ENCODE measurements at regions of chr9 and their contacts with region 1.

Region 1: DNA sequence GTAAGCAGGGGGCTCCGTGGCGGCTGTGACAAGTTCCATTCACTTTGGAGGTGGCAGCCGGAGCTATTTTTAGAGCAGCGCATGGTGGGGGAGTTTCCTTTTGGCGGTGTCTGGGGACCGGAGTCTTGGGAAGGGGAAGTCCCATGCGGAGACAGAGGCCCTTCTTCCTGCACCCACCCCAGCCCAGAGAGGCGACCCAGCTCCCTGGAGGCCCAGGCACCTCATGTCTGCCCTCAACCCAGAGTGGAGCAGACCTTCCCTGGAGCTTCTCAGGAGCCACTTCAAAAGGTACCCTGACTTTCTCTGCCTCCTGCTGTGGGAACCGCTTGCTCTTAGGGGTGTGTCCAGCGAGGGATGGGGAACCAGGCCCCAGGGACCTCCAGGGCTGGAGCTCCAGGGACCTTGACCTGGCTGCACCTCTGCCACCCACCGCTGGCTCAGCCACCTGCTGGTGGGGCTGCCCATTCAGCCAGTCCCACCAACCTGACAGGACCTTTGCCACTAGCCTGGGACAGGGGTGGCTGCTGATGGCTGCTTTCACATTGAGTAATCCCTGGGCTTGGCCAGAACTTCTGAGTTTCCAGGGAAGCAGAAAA is 34.1 kb downstream of the NEK6 start:
- DNase-seq: no peak
- H3K4me3 ChIP-seq: no peak overlapping the region
- H3K27ac ChIP-seq: no peak overlapping the region
- H3K4me1 ChIP-seq: peaks cover 0 to 14% (median 3%) of the 10 kb centered on the region in 4 experiments; a peak in 5 of 7 replicates
- H3K27me3 ChIP-seq: no peaks in the 10 kb centered on the region
- CTCF ChIP-seq: no peak
- EP300 ChIP-seq: no peak
- POLR2A ChIP-seq: no peak
- RAD21 ChIP-seq: no peak

Region 2: DNA sequence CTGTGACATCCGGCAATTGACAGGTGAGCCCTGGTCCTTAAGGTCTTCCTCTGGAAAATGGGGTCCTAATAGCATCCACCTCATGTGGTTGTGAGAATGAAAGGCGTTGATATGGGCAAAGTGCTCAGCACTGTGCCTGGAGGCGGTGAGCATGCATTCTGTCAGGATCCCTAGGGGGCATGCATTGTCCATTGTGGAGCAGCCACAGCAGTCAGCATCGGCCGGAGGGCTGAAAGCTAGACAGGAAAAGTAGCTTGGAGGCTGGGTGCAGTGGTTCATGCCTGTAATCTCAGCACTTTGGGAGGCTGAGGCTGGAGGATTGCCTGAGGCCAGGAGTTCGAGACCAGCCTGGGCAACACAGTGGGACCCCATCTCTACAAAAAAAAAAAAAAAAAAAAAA is 158.2 kb before region 1 on chr9:
- CTCF ChIA-PET with region 1: interaction called, 37 read pairs
- POLR2A ChIA-PET with region 1: no interaction called
- DNase-seq: no peak
- H3K4me3 ChIP-seq: no peak overlapping the region
- H3K27ac ChIP-seq: no peak overlapping the region
- H3K4me1 ChIP-seq: no peaks in the 10 kb centered on the region
- H3K27me3 ChIP-seq: no peaks in the 10 kb centered on the region
- CTCF ChIP-seq: peak; percentile 21 to 47 (median 26); a peak in 3 of 4 replicates
- EP300 ChIP-seq: no peak
- POLR2A ChIP-seq: no peak
- RAD21 ChIP-seq: peak; percentile 45 to 54

Region 3: GRCh38 chr9:124302921-124303320 is 11.0 kb after region 1 on chr9:
- CTCF ChIA-PET with region 1: interaction called, 24 read pairs
- POLR2A ChIA-PET with region 1: no interaction called
- DNase-seq: no peak
- H3K4me3 ChIP-seq: no peak overlapping the region
- H3K27ac ChIP-seq: no peak overlapping the region
- H3K4me1 ChIP-seq: peaks cover 0 to 7% (median 1%) of the 10 kb centered on the region in 4 experiments; a peak in 4 of 7 replicates
- H3K27me3 ChIP-seq: no peaks in the 10 kb centered on the region
- CTCF ChIP-seq: no peak
- EP300 ChIP-seq: no peak
- POLR2A ChIP-seq: no peak
- RAD21 ChIP-seq: no peak

Region 4: DNA sequence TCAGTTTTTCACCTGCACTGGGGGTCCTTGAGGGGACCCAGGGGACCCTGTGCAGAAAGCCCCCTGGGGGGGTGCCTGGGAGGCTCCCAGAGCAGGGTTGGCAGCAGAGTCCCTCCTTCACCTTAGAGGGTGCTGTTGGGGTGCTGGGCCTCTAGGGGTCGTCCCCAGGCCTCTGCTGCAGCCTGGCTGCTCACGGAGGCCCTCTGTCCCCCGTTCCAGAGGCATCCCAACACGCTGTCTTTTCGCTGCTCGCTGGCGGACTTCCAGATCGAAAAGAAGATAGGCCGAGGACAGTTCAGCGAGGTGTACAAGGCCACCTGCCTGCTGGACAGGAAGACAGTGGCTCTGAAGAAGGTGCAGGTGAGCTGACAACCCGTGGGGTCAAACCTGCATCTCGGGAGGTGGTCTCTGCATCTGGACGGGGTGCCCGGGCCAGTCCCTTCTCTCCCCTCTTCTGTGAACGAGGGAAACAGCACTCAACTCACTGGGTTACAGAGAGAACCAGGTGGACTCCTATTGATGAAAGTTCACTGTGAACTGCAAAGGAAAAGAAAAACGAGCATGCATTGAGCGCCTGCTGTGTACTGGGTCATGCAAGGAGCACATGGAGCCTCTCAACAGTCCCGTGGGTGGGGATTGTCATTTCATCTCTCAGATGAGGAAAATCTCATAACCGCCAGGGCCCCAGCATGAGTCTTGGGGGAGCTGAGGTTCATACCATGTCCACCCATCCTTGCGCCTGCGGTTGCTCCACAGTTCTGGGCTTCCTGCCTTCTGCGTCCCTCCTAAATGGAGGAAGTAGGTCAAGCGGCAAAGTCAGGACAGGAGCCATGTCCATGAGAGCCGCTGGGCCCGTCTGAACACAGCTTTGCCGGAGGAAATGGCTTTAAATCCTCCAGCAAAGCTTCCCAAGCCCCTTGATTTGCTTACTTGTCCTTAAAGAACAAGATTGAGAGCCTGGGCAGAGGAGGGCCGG is 20.7 kb after region 1 on chr9:
- CTCF ChIA-PET with region 1: interaction called, 23 read pairs
- POLR2A ChIA-PET with region 1: interaction called, 3 read pairs
- DNase-seq: no peak
- H3K4me3 ChIP-seq: no peak overlapping the region
- H3K27ac ChIP-seq: no peak overlapping the region
- H3K4me1 ChIP-seq: peaks cover 0 to 9% (median 3%) of the 10 kb centered on the region in 4 experiments; a peak in 3 of 7 replicates
- H3K27me3 ChIP-seq: no peaks in the 10 kb centered on the region
- CTCF ChIP-seq: peak; percentile 67 to 82 (median 67)
- EP300 ChIP-seq: no peak
- POLR2A ChIP-seq: no peak
- RAD21 ChIP-seq: peak; percentile 42 to 64

Region 5: GRCh38 chr9:124320062-124320973 is 28.4 kb after region 1 on chr9:
- CTCF ChIA-PET with region 1: interaction called, 10 read pairs
- POLR2A ChIA-PET with region 1: no interaction called
- DNase-seq: peak; percentile 47 to 93
- H3K4me3 ChIP-seq: no peak overlapping the region
- H3K27ac ChIP-seq: no peak overlapping the region
- H3K4me1 ChIP-seq: peaks cover 0 to 1% (median 0%) of the 10 kb centered on the region in 4 experiments; a peak in 1 of 7 replicates
- H3K27me3 ChIP-seq: no peaks in the 10 kb centered on the region
- CTCF ChIP-seq: peak in 2 of 3 experiments; percentile 81 to 96; a peak in 3 of 4 replicates
- EP300 ChIP-seq: no peak
- POLR2A ChIP-seq: no peak
- RAD21 ChIP-seq: peak; percentile 62 to 74

Measured in H1 (cell line).